Adrenal gland (tissue), 19 donors: ENCODE measurements at regions of chr11 and their contacts with region 1.

Region 1: DNA sequence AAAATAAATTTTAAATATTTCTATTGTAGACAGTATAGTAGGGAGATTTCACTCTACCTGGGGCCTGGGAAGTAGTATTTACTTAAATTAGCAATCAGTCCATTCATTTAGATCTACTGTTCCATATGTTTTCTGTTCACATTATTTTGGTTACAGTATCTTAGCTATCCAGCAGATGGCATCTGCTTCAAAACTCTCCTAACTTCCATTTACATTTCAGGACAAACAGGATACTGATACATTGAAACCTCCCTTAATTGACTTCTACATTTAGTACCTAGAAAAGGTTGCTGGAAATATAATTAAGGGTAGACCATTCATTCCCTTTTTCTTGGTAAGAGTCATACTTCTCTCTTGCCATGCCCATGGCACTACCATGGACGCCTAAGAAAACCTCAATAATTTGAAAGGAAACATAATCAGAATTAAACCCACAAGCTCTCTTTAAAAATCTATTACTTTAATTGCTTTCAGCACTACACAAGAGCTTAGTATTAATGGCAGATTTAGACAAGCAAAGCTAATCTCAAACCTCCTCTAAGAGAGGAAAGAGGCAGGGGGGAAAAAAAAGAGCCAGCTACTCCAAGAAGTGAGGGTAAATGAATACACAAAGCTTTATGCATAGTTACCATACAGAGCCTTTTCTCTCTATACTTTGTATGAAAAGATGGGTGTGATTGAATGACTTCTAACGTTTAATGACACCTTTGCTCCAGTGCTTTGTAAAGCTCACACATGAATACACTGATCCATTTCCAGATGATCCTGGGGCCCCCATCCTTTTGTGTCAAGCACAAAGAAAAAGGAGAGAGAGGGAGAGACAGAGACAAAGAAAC is 131.2 kb upstream of the MTMR2 start:
- DNase-seq: no peak
- H3K4me3 ChIP-seq: no peak overlapping the region
- H3K27ac ChIP-seq: no peak overlapping the region
- H3K4me1 ChIP-seq: no peaks in the 10 kb centered on the region
- H3K27me3 ChIP-seq: no peaks in the 10 kb centered on the region
- CTCF ChIP-seq: peak; percentile 46 to 77 (median 66)
- POLR2A ChIP-seq: no peak

Region 2: GRCh38 chr11:96342961-96343711 is 288.0 kb after region 1 on chr11 and contains the start of gene MAML2:
- intact Hi-C with region 1: loop called (anchors 5 to 10 kb)
- DNase-seq: peak; percentile 91 to 97 (median 95)
- H3K4me3 ChIP-seq: peak within 1 kb of the TSS in 3 of 4 donors; percentile 46 to 90 (median 75)
- H3K27ac ChIP-seq: peak within 1 kb of the TSS in 4 of 5 donors; percentile 42 to 92 (median 83)
- H3K4me1 ChIP-seq: peaks cover 23 to 36% of the 10 kb centered on the region in 2 donors
- H3K27me3 ChIP-seq: no peaks in the 10 kb centered on the region
- CTCF ChIP-seq: peak; percentile 78 to 97 (median 91)
- POLR2A ChIP-seq: peak in 1 of 2 donors; percentile 55
- total RNA-seq, gene MAML2: 6.2 to 19.4 (median 11.0) TPM